MCF 10A (cell line): ENCODE measurements at regions of chr2 and their contacts with region 1.

Region 1: GRCh38 chr2:42360890-42361727 is at the start of gene COX7A2L:
- DNase-seq: peak; percentile 96
- H3K4me3 Mint-ChIP-seq: peak within 1 kb of the TSS; percentile 79
- H3K27ac Mint-ChIP-seq: peak within 1 kb of the TSS; percentile 86
- H3K4me1 Mint-ChIP-seq: peaks cover 32% of the 10 kb centered on the region
- H3K27me3 Mint-ChIP-seq: no peaks in the 10 kb centered on the region
- CTCF ChIP-seq: no peak
- total RNA-seq, gene COX7A2L: 190 and 249 TPM in 2 replicates

Region 2: DNA sequence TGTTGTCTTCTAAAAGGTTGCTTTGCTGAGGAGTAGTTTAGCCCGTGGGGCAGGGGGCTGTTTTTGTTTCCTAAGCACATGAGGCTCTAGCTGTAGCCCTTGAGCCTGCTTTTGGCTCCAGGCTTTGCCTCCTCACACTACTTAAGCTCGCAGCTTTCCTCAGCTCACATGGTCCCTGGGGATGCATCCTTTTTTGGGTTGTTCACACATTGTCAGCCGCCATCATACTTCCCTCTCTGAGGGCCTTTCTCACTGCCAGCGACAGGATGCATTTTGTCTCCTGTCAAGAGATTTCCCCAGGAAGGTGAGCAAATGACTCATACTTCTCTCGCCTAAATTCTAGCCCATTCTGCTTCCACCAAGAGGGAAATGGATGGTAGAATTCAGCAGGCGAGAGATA is 592.8 kb before region 1 on chr2:
- CTCF ChIA-PET with region 1: no interaction called
- POLR2A ChIA-PET with region 1: no interaction called
- intact Hi-C with region 1: no loop called
- DNase-seq: no peak
- H3K4me3 Mint-ChIP-seq: no peak overlapping the region
- H3K27ac Mint-ChIP-seq: no peak overlapping the region
- H3K4me1 Mint-ChIP-seq: no peaks in the 10 kb centered on the region
- H3K27me3 Mint-ChIP-seq: peaks cover 11% of the 10 kb centered on the region
- CTCF ChIP-seq: no peak

Region 3: DNA sequence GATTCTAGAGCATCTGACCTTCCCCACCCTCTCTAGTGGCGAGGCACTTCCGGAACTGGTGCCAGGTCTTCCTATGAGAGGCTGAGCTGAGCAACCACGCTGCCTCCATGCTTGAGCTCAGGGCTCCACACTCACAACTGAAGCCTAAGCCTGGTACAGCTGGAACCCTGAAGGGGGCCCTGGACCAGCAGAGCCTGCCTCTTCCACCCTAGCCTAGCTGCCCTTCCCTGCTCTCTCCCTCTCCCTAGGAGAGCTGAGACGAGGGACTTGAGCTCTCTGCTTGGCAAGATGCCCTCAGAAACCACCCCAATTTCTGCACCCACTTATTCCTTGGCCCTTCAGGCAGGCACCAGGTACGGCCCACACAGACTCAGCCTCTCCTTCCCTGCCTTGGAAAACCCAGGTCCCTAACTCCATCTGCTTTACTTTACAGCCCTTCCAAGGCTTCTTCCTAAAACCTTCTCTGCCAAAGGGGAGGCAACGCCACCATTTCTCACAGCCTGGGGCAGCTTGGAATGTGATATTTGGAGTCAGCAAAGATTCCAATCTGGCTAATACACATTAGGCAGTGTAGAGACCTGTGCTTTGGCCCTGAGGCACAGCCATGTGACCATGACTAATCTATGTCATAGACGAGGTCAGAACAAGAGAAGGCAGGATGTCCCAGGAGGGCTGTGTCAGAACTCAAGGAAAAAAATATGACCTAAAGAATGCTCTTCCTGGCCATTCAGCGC is 18.9 kb before region 1 on chr2:
- CTCF ChIA-PET with region 1: interaction called, 3 read pairs
- POLR2A ChIA-PET with region 1: interaction called, 59 read pairs
- intact Hi-C with region 1: no loop called
- DNase-seq: peak; percentile 39
- H3K4me3 Mint-ChIP-seq: no peak overlapping the region
- H3K27ac Mint-ChIP-seq: peak overlapping the region; percentile 77
- H3K4me1 Mint-ChIP-seq: peaks cover 17% of the 10 kb centered on the region
- H3K27me3 Mint-ChIP-seq: no peaks in the 10 kb centered on the region
- CTCF ChIP-seq: no peak

Region 4: DNA sequence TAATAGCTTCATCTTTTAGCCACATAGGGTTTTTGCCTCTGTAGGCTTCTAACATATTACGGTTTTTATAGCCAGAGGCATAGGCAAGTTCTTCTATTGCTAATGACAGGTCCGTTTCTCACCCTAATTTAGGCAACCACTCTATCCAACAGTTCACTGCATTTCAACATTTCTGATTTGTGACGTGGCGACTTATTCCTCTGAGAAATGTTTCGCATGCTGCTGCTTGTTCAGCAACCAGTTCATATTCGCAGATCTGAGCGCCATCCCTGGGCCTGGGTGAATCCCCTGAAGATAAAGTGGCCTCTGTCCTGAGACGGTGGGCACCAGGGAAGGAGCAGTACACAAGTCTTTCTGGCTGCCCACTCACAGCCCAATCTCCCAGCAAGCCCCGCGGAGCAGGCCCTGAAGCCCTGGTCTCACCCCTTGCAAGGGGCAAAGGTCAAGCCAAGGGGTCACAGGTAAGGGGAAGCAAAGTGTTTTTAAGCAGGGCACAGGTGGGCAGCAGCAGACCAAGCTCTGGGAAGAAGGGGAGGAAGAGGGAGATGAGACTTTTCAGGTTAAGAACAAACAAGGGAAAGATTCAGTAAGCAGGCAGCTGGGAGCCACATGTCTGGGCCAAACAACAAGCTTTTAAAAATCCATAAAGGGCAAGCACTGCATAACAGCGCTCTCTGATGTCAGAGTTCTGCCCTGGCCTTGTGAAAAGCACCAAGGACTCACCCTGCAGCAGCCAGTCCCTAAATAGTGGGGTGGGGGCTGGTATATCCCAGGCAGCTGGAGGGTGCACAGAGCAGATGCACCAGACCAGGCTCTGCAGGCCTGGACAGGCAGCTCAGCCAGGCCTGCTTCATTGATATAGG is 10.7 kb after region 1 on chr2:
- CTCF ChIA-PET with region 1: interaction called, 9 read pairs
- POLR2A ChIA-PET with region 1: interaction called, 25 read pairs
- intact Hi-C with region 1: no loop called
- DNase-seq: peak; percentile 21
- H3K4me3 Mint-ChIP-seq: peak overlapping the region; percentile 11
- H3K27ac Mint-ChIP-seq: no peak overlapping the region
- H3K4me1 Mint-ChIP-seq: peaks cover 14% of the 10 kb centered on the region
- H3K27me3 Mint-ChIP-seq: no peaks in the 10 kb centered on the region
- CTCF ChIP-seq: no peak

Region 5: GRCh38 chr2:42421601-42422252 is 60.6 kb after region 1 on chr2:
- CTCF ChIA-PET with region 1: interaction called, 3 read pairs
- POLR2A ChIA-PET with region 1: interaction called, 3 read pairs
- intact Hi-C with region 1: loop called (anchors 2 kb)
- DNase-seq: no peak
- H3K4me3 Mint-ChIP-seq: no peak overlapping the region
- H3K27ac Mint-ChIP-seq: peak overlapping the region; percentile 66
- H3K4me1 Mint-ChIP-seq: peaks cover 13% of the 10 kb centered on the region
- H3K27me3 Mint-ChIP-seq: no peaks in the 10 kb centered on the region
- CTCF ChIP-seq: no peak